Pancreas (tissue), 10 donors: ENCODE measurements at regions of chr4 and their contacts with region 1.

Region 1: GRCh38 chr4:110631584-110632505 is 9.0 kb upstream of the PITX2 start:
- DNase-seq: peak; percentile 54 to 87 (median 72)
- ATAC-seq: peak; percentile 95 to 98 (median 97)
- H3K4me3 ChIP-seq: peak overlapping the region in 2 of 4 donors; percentile 26 to 32
- H3K27ac ChIP-seq: no peak overlapping the region
- H3K4me1 ChIP-seq: peaks cover 0 to 8% (median 6%) of the 10 kb centered on the region in 3 donors
- H3K27me3 ChIP-seq: peaks cover 5 to 83% (median 45%) of the 10 kb centered on the region in 4 donors
- CTCF ChIP-seq: peak; percentile 39 to 65 (median 50)

Region 2: DNA sequence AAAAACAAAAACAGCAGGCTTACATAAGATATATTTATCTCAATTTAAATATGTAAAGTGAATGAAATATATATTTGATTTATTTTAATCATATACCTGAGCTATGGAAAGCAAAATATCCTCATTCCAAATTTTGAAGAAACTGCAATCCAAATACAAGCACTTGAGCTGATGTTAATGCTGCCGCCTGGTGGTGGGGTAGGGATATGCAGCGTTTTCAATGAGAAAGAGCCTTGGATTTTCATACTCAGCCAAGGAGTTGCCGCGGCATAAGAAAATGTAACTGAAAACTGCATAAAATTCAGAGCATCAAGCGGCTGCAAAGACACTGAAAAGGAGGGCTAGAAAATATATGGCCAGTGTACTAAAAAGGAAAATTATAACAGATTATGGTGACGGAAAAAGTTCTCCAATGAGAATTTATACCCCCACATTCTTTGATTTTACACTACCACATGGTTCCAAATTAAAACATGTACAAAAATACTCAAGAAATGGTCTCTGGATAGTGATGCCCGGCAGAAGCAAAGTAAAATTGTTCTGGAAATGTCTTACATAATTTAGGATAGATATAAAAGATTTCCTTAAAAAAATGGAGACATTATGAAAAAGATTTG is 651.3 kb after region 1 on chr4:
- intact Hi-C with region 1: loop called in 1 of 3 experiments (anchors 10 kb)
- DNase-seq: peak; percentile 25 to 82 (median 40)
- ATAC-seq: peak in 3 of 4 donors; percentile 57 to 69 (median 65)
- H3K4me3 ChIP-seq: no peak overlapping the region
- H3K27ac ChIP-seq: no peak overlapping the region
- H3K4me1 ChIP-seq: no peaks in the 10 kb centered on the region
- H3K27me3 ChIP-seq: peaks cover 0 to 5% (median 0%) of the 10 kb centered on the region in 4 donors
- CTCF ChIP-seq: peak; percentile 36 to 65 (median 60)

Region 3: DNA sequence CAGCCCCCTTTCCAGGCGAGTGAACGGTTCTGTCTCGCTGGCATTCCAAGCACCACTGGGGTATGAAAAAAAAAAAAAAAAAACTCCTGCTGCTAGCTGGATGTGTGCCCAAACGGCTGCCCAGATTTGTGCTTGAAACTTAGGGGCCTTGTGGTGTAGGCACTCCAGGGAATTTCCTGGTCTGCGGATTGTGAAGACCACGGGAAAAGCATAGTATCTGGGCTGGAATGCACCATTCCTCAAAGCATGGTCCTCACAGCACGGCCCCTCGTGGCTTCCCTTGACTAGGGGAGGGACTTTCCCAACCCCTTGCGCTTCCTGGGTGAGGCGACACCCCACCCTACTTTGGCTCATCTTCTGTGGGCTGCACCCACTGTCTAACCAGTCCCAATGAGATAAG is 996.6 kb after region 1 on chr4:
- intact Hi-C with region 1: loop called in 1 of 3 experiments (anchors 10 kb)
- DNase-seq: peak in 1 of 6 donors; percentile 22
- ATAC-seq: no peak
- H3K4me3 ChIP-seq: no peak overlapping the region
- H3K27ac ChIP-seq: no peak overlapping the region
- H3K4me1 ChIP-seq: no peaks in the 10 kb centered on the region
- H3K27me3 ChIP-seq: peaks cover 0 to 15% (median 0%) of the 10 kb centered on the region in 4 donors
- CTCF ChIP-seq: no peak